Transverse colon (tissue), 4 donors: ENCODE measurements at regions of chr13 and their contacts with region 1.

Region 1: GRCh38 chr13:60540276-60540675 is 143.3 kb downstream of the TDRD3 start:
- DNase-seq: no peak
- H3K4me3 ChIP-seq: no peak overlapping the region
- H3K27ac ChIP-seq: no peak overlapping the region
- H3K4me1 ChIP-seq: no peaks in the 10 kb centered on the region
- H3K27me3 ChIP-seq: no peaks in the 10 kb centered on the region
- CTCF ChIP-seq: no peak
- EP300 ChIP-seq: no peak
- POLR2A ChIP-seq: no peak

Region 2: GRCh38 chr13:60230593-60230992 is 309.7 kb before region 1 on chr13:
- in situ Hi-C with region 1: no loop called
- intact Hi-C with region 1: loop called (anchors 5 kb)
- DNase-seq: no peak
- H3K4me3 ChIP-seq: no peak overlapping the region
- H3K27ac ChIP-seq: no peak overlapping the region
- H3K4me1 ChIP-seq: no peaks in the 10 kb centered on the region
- H3K27me3 ChIP-seq: no peaks in the 10 kb centered on the region
- CTCF ChIP-seq: no peak
- EP300 ChIP-seq: no peak
- POLR2A ChIP-seq: no peak

Region 3: GRCh38 chr13:61286148-61286745 is 746.0 kb after region 1 on chr13:
- in situ Hi-C with region 1: no loop called
- intact Hi-C with region 1: no loop called
- DNase-seq: no peak
- H3K4me3 ChIP-seq: no peak overlapping the region
- H3K27ac ChIP-seq: no peak overlapping the region
- H3K4me1 ChIP-seq: no peaks in the 10 kb centered on the region
- H3K27me3 ChIP-seq: no peaks in the 10 kb centered on the region
- CTCF ChIP-seq: no peak
- EP300 ChIP-seq: no peak
- POLR2A ChIP-seq: no peak